ENCODE measurements at regions of chr13 and their contacts with region 1.

Region 1: DNA sequence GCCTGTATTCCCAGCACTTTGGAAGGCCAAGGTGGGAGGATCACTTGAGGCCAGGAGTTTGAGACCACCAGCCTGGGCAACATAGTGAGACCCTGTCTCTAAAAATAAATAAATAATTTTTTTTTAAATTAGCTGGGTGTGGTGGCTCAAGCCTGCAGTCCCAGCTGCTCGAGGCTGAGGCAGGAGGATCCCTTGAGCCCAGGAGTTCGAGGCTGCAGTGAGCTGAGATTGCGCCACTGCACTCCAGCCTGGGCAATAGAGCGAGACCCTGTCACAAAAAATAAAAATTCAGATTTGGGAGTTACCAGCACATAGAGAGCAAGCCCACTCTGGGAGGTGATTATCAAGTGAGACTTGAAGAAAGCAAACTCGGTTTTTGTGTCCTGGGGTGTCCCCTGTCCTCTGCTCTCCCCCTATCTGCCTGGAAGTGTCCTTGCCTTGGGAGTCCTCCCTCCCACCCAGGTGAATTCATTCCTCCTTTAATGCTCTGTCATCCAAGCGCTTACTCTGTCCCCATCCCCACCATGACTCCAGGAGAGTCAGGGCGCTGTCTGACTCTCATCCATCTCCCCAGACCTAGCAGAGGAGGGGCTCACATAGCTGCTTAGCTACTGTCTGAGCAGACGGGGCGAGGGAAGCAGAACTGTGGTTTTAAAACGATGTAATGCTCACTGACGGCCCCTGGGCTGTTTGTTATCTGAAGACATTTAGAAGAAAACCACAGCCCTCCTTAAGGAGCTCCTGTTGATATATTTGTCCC is 146.8 kb downstream of the STK24 start:
- DNase-seq: no peak
- H3K4me3 Mint-ChIP-seq: no peak overlapping the region
- H3K27ac Mint-ChIP-seq: no peak overlapping the region
- H3K4me1 Mint-ChIP-seq: no peaks in the 10 kb centered on the region
- H3K27me3 Mint-ChIP-seq: no peaks in the 10 kb centered on the region
- CTCF ChIP-seq: no peak

Region 2: GRCh38 chr13:97855570-97856303 is 574.4 kb before region 1 on chr13:
- CTCF ChIA-PET with region 1: no interaction called
- intact Hi-C with region 1: loop called (anchors 5 kb)
- DNase-seq: peak; percentile 2
- H3K4me3 Mint-ChIP-seq: no peak overlapping the region
- H3K27ac Mint-ChIP-seq: no peak overlapping the region
- H3K4me1 Mint-ChIP-seq: peaks cover 10% of the 10 kb centered on the region
- H3K27me3 Mint-ChIP-seq: peaks cover 23% of the 10 kb centered on the region
- CTCF ChIP-seq: peak; percentile 29

Region 3: GRCh38 chr13:98033277-98034247 is 396.6 kb before region 1 on chr13:
- CTCF ChIA-PET with region 1: interaction called, 3 read pairs
- intact Hi-C with region 1: loop called (anchors 10 kb)
- DNase-seq: peak; percentile 9
- H3K4me3 Mint-ChIP-seq: no peak overlapping the region
- H3K27ac Mint-ChIP-seq: no peak overlapping the region
- H3K4me1 Mint-ChIP-seq: no peaks in the 10 kb centered on the region
- H3K27me3 Mint-ChIP-seq: no peaks in the 10 kb centered on the region
- CTCF ChIP-seq: no peak